Posterior cingulate gyrus (tissue), 11 donors: ENCODE measurements at regions of chr18 and their contacts with region 1.

Region 1: GRCh38 chr18:79644006-79644665 is 35.5 kb upstream of the CTDP1 start:
- DNase-seq: peak in 8 of 10 donors; percentile 62 to 94 (median 75)

Region 2: GRCh38 chr18:78587096-78587495 is 1057.0 kb before region 1 on chr18:
- intact Hi-C with region 1: no loop called
- DNase-seq: no peak

Region 3: GRCh38 chr18:79380816-79381806 is 263.0 kb before region 1 on chr18:
- intact Hi-C with region 1: loop called (anchors 1 kb)
- DNase-seq: peak; percentile 58 to 96 (median 80)

Region 4: GRCh38 chr18:79528846-79529245 is 115.3 kb before region 1 on chr18:
- intact Hi-C with region 1: loop called (anchors 2 kb)
- DNase-seq: peak in 8 of 10 donors; percentile 36 to 84 (median 72)